Psoas muscle (tissue), 8 donors: ENCODE measurements at regions of chr2 and their contacts with region 1.

Region 1: GRCh38 chr2:31893094-31893493 is 117.7 kb downstream of the MEMO1 start:
- DNase-seq: no peak
- ATAC-seq: no peak
- H3K4me3 ChIP-seq: no peak overlapping the region
- H3K27ac ChIP-seq: no peak overlapping the region
- H3K4me1 ChIP-seq: no peaks in the 10 kb centered on the region
- H3K27me3 ChIP-seq: no peaks in the 10 kb centered on the region
- CTCF ChIP-seq: no peak

Region 2: DNA sequence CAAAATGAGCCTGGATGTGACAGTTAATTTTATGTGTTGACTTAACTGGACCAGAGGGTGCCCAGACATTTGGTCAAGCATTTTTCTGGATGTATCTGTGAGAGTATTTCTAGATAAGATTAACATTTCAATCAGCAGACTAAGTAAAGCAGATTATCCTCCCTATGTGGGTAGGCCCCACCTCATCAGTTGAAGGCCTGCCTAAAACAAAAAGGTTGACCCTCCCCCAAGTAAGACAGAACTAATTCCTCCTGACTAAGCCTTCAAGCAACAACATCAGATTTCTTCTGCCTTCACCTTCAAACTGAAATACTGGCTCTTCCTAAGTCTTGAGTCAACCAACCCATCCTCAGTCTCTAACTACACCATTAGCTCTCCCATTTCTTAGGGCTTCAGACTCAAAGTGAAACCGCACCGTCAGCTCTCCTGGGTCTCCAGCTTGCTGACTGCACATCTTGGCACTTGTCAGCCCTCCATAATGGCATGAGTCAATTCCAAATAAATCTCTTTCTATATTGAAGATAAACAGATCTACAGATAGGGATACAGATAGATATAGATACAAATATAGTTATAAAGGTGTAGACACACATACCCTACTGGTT is 69.8 kb after region 1 on chr2:
- intact Hi-C with region 1: no loop called
- DNase-seq: no peak
- ATAC-seq: peak in 2 of 4 donors; percentile 32 to 38
- H3K4me3 ChIP-seq: no peak overlapping the region
- H3K27ac ChIP-seq: no peak overlapping the region
- H3K4me1 ChIP-seq: peaks cover 8% of the 10 kb centered on the region
- H3K27me3 ChIP-seq: no peaks in the 10 kb centered on the region
- CTCF ChIP-seq: no peak

Region 3: GRCh38 chr2:31997653-31998052 is 104.6 kb after region 1 on chr2:
- intact Hi-C with region 1: loop called in 1 of 2 experiments (anchors 5 kb)
- DNase-seq: no peak
- ATAC-seq: no peak
- H3K4me3 ChIP-seq: no peak overlapping the region
- H3K27ac ChIP-seq: peak overlapping the region; percentile 6
- H3K4me1 ChIP-seq: peaks cover 14% of the 10 kb centered on the region
- H3K27me3 ChIP-seq: no peaks in the 10 kb centered on the region
- CTCF ChIP-seq: no peak